ENCODE measurements at regions of chr11 and their contacts with region 1.

Region 1: DNA sequence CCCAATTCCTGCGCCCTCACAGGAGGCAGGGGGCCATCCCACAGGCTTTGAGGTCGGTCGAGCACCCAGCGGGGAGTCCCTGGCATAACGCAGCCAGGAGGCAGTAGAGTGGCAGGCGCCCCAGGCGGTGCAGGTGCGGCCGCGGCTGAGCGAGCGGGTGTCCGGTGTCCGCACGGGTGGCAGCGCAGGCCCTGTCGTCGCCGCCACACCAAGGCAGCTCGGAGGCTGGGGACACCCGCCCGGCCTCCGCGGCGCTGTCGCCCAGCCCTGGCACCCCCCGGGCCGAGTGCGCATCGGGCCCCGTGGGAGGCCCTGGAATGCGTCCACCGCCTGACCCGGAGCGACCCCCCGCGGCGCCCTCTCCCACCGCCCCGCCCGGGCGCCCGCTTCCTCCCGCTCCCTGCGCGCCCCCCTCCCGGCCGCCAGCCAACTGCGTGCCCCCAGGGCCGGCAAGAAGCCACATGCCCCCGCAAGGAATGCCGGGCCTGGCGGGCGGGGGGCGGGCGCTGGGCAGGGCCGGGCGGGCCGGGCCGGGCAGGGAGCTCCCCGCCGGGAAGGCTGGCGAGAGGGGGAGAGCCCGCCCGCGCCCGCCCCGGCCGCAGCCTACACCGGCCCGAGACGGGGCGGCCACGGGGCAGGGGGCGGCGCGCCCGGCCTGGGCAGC is 33.9 kb downstream of the PRDM11 start:
- DNase-seq: peak; percentile 40
- H3K4me3 ChIP-seq: peak overlapping the region in 2 of 3 experiments; percentile 33
- H3K27ac ChIP-seq: peak overlapping the region; percentile 46
- H3K4me1 ChIP-seq: peaks cover 12% of the 10 kb centered on the region
- H3K27me3 ChIP-seq: no peaks in the 10 kb centered on the region
- CTCF ChIP-seq: peak; percentile 31 to 62
- POLR2A ChIP-seq: no peak

Region 2: GRCh38 chr11:45147017-45147728 is 33.1 kb before region 1 on chr11:
- CTCF ChIA-PET with region 1: no interaction called
- POLR2A ChIA-PET with region 1: no interaction called
- dilution Hi-C with region 1: no loop called
- intact Hi-C with region 1: loop called (anchors 1 kb)
- DNase-seq: peak; percentile 94
- H3K4me3 ChIP-seq: peak overlapping the region; percentile 41 to 86 (median 59)
- H3K27ac ChIP-seq: peak overlapping the region; percentile 47
- H3K4me1 ChIP-seq: peaks cover 17% of the 10 kb centered on the region
- H3K27me3 ChIP-seq: peaks cover 10 to 31% of the 10 kb centered on the region in 2 experiments
- CTCF ChIP-seq: no peak
- POLR2A ChIP-seq: no peak

Region 3: GRCh38 chr11:45204761-45205160 is 24.4 kb after region 1 on chr11:
- CTCF ChIA-PET with region 1: interaction called, 16 read pairs
- POLR2A ChIA-PET with region 1: interaction called, 6 read pairs
- dilution Hi-C with region 1: no loop called
- intact Hi-C with region 1: no loop called
- DNase-seq: no peak
- H3K4me3 ChIP-seq: no peak overlapping the region
- H3K27ac ChIP-seq: no peak overlapping the region
- H3K4me1 ChIP-seq: peaks cover 3% of the 10 kb centered on the region
- H3K27me3 ChIP-seq: no peaks in the 10 kb centered on the region
- CTCF ChIP-seq: no peak
- POLR2A ChIP-seq: no peak

Region 4: DNA sequence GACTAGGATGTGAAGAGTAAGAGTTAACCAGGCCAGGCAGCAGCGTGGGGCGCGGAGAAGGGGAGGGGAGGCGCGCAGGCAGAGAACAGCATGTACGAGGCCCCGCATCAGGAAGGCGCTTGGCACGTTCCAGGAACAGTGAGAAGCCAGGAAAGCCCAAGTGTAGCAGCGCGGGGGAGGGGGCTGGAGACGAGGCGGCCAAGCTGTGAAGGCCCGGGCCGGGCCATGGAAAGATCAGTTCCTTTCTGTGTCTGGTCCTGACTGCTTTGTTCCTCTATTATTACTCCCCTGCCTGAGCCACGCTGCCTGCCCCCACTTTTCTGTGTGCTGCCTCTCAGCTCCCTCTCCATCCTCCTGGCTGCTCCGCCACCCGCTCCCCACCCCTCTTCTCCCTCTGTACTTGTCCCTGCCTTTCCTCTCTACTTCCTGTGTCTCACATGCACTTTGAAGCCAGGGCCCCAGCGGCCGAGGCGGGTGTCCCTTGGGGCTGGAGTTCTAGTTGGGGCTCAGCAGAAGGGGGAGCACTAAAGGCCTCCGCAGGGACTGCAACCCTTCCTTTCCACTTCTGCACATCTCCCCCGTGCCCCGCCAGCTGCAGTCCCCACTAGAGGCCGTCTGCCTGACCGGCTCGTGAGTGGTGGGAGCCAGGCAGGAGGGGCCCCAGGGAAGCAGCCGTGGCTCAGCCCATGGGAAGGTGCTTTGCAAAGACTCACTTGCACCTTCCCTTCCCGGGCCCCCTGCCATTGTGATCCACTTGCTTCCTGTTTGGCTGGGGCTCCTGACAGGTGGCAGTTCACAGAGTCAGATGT is 29.8 kb after region 1 on chr11:
- CTCF ChIA-PET with region 1: interaction called, 6 read pairs
- POLR2A ChIA-PET with region 1: no interaction called
- dilution Hi-C with region 1: no loop called
- intact Hi-C with region 1: loop called (anchors 1 kb)
- DNase-seq: peak; percentile 76
- H3K4me3 ChIP-seq: no peak overlapping the region
- H3K27ac ChIP-seq: peak overlapping the region; percentile 17
- H3K4me1 ChIP-seq: peaks cover 14% of the 10 kb centered on the region
- H3K27me3 ChIP-seq: no peaks in the 10 kb centered on the region
- CTCF ChIP-seq: peak in 1 of 2 donors; percentile 8
- POLR2A ChIP-seq: peak; percentile 24

Region 5: DNA sequence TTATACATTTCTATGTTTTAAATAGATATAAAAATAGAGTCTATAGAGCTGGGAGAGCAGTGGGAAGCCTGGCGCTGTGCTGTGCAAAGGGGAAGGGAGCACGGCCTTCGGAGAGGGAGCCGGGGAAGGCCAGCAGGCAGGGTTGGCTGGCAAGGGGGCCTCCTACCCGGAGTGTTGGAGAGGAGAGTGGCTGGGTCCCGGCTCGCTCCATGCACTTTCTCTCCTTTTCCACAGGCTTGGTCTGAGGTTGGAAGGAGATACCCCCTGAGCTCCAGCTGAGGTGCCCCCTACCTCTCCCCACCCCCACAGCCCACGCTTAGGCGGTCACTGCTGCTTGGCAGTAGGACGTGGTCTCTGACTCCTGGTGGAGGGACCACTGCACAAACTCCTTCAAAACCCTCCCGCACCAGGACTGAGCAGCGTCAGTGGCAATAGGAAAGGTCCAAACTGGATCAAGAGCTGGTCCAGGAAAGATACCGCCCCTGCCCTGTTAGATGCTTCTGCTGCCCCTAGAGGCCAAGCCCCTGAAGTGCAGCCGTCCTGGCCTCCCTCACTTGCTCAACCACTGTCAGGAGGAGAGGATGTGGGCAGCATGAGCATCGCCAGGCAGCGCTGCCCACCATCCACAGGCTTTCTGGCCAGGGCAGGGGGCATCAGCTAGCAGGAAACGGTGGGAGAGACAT is 53.0 kb after region 1 on chr11:
- CTCF ChIA-PET with region 1: interaction called, 35 read pairs
- POLR2A ChIA-PET with region 1: no interaction called
- dilution Hi-C with region 1: no loop called
- intact Hi-C with region 1: no loop called
- DNase-seq: peak; percentile 52
- H3K4me3 ChIP-seq: no peak overlapping the region
- H3K27ac ChIP-seq: no peak overlapping the region
- H3K4me1 ChIP-seq: no peaks in the 10 kb centered on the region
- H3K27me3 ChIP-seq: peaks cover 4 to 12% of the 10 kb centered on the region in 2 experiments
- CTCF ChIP-seq: peak; percentile 73 to 91
- POLR2A ChIP-seq: no peak

Region 6: DNA sequence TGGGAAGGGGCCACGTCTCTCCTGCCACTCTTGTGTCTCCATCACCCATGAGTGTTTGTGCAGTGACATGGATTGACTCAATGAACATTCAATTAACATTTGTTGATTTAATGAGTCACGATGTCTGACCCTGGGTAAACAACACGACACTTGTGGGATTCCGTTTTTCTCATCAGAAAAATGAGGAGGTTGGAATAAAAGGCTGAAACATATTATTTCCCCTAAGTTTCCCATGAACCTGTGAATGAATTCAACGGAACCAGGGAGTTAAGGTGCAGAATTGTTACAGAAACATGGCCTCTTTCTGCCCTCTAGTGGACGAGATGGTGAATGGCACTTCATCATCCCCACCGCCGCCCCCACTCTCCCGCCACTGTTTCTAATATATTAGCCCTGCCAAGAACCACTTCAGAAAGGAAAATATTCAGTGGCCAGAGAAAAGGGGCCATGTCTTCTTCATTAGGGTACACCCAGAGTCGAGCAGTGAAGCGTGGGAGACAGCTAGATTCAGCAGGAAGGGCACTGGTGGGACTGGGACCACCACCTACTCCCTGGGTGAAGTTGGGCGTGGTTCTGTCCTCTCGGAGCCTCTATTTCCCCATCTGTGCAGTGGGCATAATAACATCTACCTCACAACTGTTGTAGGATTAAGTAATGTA is 152.1 kb after region 1 on chr11:
- CTCF ChIA-PET with region 1: no interaction called
- POLR2A ChIA-PET with region 1: no interaction called
- dilution Hi-C with region 1: no loop called
- intact Hi-C with region 1: loop called (anchors 1 kb)
- DNase-seq: peak; percentile 51
- H3K4me3 ChIP-seq: no peak overlapping the region
- H3K27ac ChIP-seq: no peak overlapping the region
- H3K4me1 ChIP-seq: peaks cover 10% of the 10 kb centered on the region
- H3K27me3 ChIP-seq: peaks cover 1% of the 10 kb centered on the region in 2 experiments
- CTCF ChIP-seq: peak; percentile 25 to 64
- POLR2A ChIP-seq: no peak

Region 7: GRCh38 chr11:45371251-45372115 is 191.2 kb after region 1 on chr11:
- CTCF ChIA-PET with region 1: no interaction called
- POLR2A ChIA-PET with region 1: no interaction called
- dilution Hi-C with region 1: no loop called
- intact Hi-C with region 1: no loop called
- DNase-seq: peak; percentile 63
- H3K4me3 ChIP-seq: no peak overlapping the region
- H3K27ac ChIP-seq: no peak overlapping the region
- H3K4me1 ChIP-seq: no peaks in the 10 kb centered on the region
- H3K27me3 ChIP-seq: peaks cover 6 to 7% of the 10 kb centered on the region in 2 experiments
- CTCF ChIP-seq: peak; percentile 94 to 96
- POLR2A ChIP-seq: no peak

Measured in endothelial cell of umbilical vein (primary cell).